B cell (primary cell): ENCODE measurements at regions of chr5 and their contacts with region 1.

Region 1: DNA sequence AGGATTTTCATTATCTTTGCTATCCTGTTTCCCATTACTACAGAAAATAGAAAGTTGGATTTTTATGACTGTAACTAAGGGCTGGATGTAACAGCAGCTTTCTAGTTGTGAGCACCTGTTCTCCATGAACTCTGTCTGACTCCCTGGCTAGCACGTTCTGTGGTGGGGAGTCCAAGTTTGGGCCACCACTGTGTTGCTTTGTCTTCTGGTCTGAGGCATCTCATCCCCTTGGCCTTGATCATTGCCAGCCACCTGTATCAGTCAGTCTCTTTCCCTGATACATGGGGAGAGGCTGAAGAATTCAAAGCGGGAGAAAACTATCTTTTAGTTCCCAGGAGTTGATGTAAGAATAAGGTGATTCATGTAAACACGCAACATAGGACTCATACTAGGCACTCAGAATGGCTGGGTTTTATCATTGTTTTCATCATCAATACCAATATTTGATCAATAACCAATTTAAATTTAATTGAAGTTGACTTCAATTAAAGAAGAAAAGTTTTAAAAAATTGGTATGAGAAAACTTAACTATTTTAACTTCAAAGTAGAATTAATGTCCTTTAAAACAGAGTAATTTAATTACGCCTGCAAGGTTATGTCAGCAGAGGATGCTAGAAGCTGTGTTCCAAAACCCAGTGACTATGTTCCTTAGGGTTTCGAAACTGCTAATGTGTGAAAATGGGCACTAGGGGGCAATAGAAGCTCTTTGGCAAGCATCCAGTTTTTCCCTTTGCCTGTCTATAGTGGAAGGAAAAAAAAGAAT is 33.6 kb downstream of the WDR70 start:
- DNase-seq: peak; percentile 60
- ATAC-seq: no peak
- H3K4me3 ChIP-seq: no peak overlapping the region
- H3K4me3 Mint-ChIP-seq: no peak overlapping the region
- H3K27ac ChIP-seq: no peak overlapping the region
- H3K27ac Mint-ChIP-seq: no peak overlapping the region
- H3K4me1 ChIP-seq: no peaks in the 10 kb centered on the region
- H3K4me1 Mint-ChIP-seq: no peaks in the 10 kb centered on the region
- H3K27me3 ChIP-seq: no peaks in the 10 kb centered on the region
- H3K27me3 Mint-ChIP-seq: no peaks in the 10 kb centered on the region
- CTCF ChIP-seq: peak; percentile 78

Region 2: DNA sequence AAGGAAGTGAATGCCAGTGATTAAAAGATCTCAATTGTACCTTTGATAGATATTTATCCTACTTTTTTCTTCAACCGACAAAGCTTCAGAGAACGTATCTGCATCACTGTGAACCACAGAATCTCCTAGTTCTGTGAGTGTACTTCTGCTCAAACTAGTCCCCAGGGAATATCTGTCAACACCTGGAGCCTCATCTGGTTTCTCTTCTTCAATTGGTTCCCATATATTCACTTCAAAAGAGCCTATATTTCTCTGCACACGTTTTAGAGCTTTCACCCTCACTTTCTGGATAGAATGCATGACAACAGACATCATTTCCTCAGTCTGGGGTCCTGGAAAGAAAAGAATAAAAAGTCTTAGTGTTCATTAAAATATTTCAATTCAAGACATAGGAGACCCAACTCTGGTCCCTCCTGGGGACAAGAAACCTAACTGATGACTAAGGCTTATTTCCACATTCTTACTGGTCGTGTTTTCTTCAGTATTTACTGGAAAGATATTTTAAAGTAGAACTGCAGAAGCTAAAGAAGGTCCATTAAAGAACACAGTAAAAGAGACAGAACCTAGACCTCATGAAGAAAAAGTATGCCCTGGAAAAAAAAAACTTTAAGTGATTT is 227.8 kb before region 1 on chr5:
- CTCF ChIA-PET with region 1: no interaction called
- POLR2A ChIA-PET with region 1: no interaction called
- intact Hi-C with region 1: no loop called
- DNase-seq: peak; percentile 78
- ATAC-seq: peak; percentile 97
- H3K4me3 ChIP-seq: no peak overlapping the region
- H3K4me3 Mint-ChIP-seq: no peak overlapping the region
- H3K27ac ChIP-seq: peak overlapping the region in 1 of 2 donors; percentile 10
- H3K27ac Mint-ChIP-seq: no peak overlapping the region
- H3K4me1 ChIP-seq: peaks cover 7 to 11% of the 10 kb centered on the region in 2 donors
- H3K4me1 Mint-ChIP-seq: peaks cover 15% of the 10 kb centered on the region
- H3K27me3 ChIP-seq: no peaks in the 10 kb centered on the region
- H3K27me3 Mint-ChIP-seq: no peaks in the 10 kb centered on the region
- CTCF ChIP-seq: no peak

Region 3: DNA sequence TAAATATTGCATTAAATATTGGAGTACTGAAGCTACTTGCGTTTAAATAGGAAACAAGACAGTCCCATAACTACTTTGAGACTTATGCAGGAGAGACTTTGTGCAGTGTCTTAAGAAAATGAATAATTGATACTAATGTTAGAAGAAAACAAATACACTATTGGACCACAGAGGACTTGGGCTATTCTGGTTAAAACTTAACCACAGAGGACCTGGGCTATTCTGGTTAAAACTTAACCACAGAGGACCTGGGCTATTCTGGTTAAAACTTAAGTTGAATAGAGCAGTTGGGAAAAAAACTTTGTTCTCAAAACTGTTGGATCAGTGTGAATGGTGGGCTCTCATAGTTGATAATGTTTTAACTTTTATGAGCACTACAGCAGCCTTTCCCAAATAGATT is 108.1 kb after region 1 on chr5:
- CTCF ChIA-PET with region 1: no interaction called
- POLR2A ChIA-PET with region 1: no interaction called
- intact Hi-C with region 1: no loop called
- DNase-seq: no peak
- ATAC-seq: no peak
- H3K4me3 ChIP-seq: no peak overlapping the region
- H3K4me3 Mint-ChIP-seq: no peak overlapping the region
- H3K27ac ChIP-seq: no peak overlapping the region
- H3K27ac Mint-ChIP-seq: no peak overlapping the region
- H3K4me1 ChIP-seq: no peaks in the 10 kb centered on the region
- H3K4me1 Mint-ChIP-seq: no peaks in the 10 kb centered on the region
- H3K27me3 ChIP-seq: no peaks in the 10 kb centered on the region
- H3K27me3 Mint-ChIP-seq: no peaks in the 10 kb centered on the region
- CTCF ChIP-seq: no peak

Region 4: DNA sequence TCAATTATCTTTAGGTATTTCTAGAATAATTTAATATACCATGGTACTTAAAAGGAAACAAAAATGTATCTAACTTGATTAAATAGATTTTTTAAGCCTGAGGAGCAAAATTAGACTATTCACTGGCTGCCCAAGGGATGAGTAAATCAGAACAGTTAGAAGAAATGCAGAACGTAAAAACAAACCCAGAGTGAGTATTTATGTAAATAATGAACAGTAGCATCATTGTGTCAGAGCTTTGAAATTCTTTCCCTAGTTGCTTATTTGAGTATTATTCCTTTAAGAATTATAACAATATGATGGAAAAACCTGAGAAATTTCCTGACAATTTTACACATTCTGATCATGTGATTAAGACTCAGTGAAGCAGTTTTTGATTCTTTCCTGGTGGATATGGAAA is 226.2 kb after region 1 on chr5:
- CTCF ChIA-PET with region 1: no interaction called
- POLR2A ChIA-PET with region 1: no interaction called
- intact Hi-C with region 1: no loop called
- DNase-seq: no peak
- ATAC-seq: no peak
- H3K4me3 ChIP-seq: no peak overlapping the region
- H3K4me3 Mint-ChIP-seq: no peak overlapping the region
- H3K27ac ChIP-seq: no peak overlapping the region
- H3K27ac Mint-ChIP-seq: no peak overlapping the region
- H3K4me1 ChIP-seq: no peaks in the 10 kb centered on the region
- H3K4me1 Mint-ChIP-seq: no peaks in the 10 kb centered on the region
- H3K27me3 ChIP-seq: no peaks in the 10 kb centered on the region
- H3K27me3 Mint-ChIP-seq: no peaks in the 10 kb centered on the region
- CTCF ChIP-seq: no peak

Region 5: DNA sequence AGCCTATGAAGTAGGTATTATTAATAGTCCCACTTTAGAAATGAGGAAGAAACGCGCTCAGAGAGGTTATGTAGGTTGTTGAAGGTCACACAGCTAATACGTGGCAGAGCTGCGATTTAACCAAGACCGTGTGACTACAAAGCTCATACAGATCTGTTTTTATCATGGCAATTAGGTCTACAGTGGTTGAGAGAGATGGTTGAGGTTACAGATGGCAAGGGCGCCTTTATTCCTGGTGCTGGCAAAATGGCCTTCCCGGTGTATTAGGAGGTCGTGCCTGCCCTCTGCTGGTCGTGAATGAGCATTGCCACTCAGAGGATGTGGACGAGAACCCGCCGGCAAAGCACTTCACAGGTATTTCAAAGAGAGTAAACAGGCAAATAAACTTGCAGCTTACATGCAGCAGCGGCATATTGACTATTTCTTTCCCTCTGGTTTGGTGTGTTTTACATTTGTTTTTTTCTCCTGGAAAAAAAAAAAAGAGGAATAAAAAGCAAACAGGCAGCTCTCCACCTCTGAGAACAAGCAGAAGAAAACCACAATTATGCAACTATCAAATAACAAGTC is 780.4 kb after region 1 on chr5:
- CTCF ChIA-PET with region 1: interaction called, 17 read pairs
- POLR2A ChIA-PET with region 1: no interaction called
- intact Hi-C with region 1: no loop called
- DNase-seq: peak; percentile 40
- ATAC-seq: no peak
- H3K4me3 ChIP-seq: no peak overlapping the region
- H3K4me3 Mint-ChIP-seq: no peak overlapping the region
- H3K27ac ChIP-seq: no peak overlapping the region
- H3K27ac Mint-ChIP-seq: no peak overlapping the region
- H3K4me1 ChIP-seq: no peaks in the 10 kb centered on the region
- H3K4me1 Mint-ChIP-seq: peaks cover 3% of the 10 kb centered on the region
- H3K27me3 ChIP-seq: peaks cover 0 to 12% (median 0%) of the 10 kb centered on the region in 4 experiments
- H3K27me3 Mint-ChIP-seq: peaks cover 47% of the 10 kb centered on the region
- CTCF ChIP-seq: peak; percentile 74